Colonic mucosa (tissue), 4 donors: ENCODE measurements at regions of chr19 and their contacts with region 1.

Region 1: DNA sequence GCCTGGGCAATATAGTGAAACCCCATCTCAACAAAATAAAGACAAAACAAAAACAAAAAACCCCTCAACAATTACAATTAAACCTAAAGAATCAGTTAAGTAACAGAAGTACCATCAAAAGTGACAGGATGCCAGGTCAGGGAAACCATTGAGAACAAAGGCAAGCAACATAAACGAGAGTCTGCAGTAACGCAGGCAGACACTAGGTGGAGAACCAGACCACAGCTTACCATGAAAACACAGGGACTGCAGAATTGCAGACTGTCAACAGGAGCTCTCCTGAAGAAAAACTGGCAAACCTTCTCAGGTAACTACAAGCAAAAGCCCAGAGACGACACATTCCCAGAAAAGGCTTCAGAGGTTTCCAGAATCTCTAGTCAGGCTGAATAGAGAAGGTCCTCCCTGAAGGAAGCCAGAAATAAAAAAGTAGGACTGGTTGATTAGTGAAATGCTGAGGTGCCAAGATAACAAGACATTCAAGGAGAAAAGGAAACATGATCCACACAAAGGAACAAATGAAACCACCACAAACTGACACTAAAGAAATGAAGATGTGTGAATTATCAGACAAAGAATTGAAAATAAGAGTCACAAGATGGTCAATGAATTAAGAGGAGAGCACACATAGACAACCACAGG is 2.2 kb upstream of the ZNF665 start:
- DNase-seq: peak; percentile 84
- H3K4me3 ChIP-seq: no peak overlapping the region
- H3K27ac ChIP-seq: no peak overlapping the region
- H3K4me1 ChIP-seq: no peaks in the 10 kb centered on the region
- H3K27me3 ChIP-seq: no peaks in the 10 kb centered on the region
- CTCF ChIP-seq: peak; percentile 80

Region 2: GRCh38 chr19:53103198-53103944 is 92.0 kb before region 1 on chr19 and contains the start of gene ZNF160:
- intact Hi-C with region 1: loop called (anchors 5 kb)
- DNase-seq: peak; percentile 99
- H3K4me3 ChIP-seq: peak within 1 kb of the TSS; percentile 67
- H3K27ac ChIP-seq: peak within 1 kb of the TSS; percentile 87
- H3K4me1 ChIP-seq: peaks cover 9% of the 10 kb centered on the region
- H3K27me3 ChIP-seq: no peaks in the 10 kb centered on the region
- CTCF ChIP-seq: no peak
- total RNA-seq, gene ZNF160: 15.5 to 20.9 TPM

Region 3: GRCh38 chr19:53333463-53334449 is 138.4 kb after region 1 on chr19 and contains the start of gene ZNF845:
- intact Hi-C with region 1: loop called (anchors 10 kb)
- DNase-seq: peak; percentile 99
- H3K4me3 ChIP-seq: peak within 1 kb of the TSS; percentile 82
- H3K27ac ChIP-seq: peak within 1 kb of the TSS; percentile 32
- H3K4me1 ChIP-seq: no peaks in the 10 kb centered on the region
- H3K27me3 ChIP-seq: no peaks in the 10 kb centered on the region
- CTCF ChIP-seq: no peak
- total RNA-seq, gene ZNF845: 7.7 to 7.9 TPM

Region 4: GRCh38 chr19:53511933-53512374 is 316.6 kb after region 1 on chr19:
- intact Hi-C with region 1: loop called (anchors 10 kb)
- DNase-seq: peak; percentile 54
- H3K4me3 ChIP-seq: no peak overlapping the region
- H3K27ac ChIP-seq: no peak overlapping the region
- H3K4me1 ChIP-seq: no peaks in the 10 kb centered on the region
- H3K27me3 ChIP-seq: no peaks in the 10 kb centered on the region
- CTCF ChIP-seq: peak; percentile 31